SK-N-SH (cell line): ENCODE measurements at regions of chr1 and their contacts with region 1.

Region 1: GRCh38 chr1:5464346-5464745 is 527.9 kb downstream of the NPHP4 start:
- DNase-seq: no peak
- H3K4me3 ChIP-seq: no peak overlapping the region
- H3K27ac ChIP-seq: peak overlapping the region in 1 of 2 experiments; percentile 92; a peak in 2 of 4 replicates
- H3K4me1 ChIP-seq: peaks cover 0 to 25% of the 10 kb centered on the region in 2 experiments; a peak in 1 of 4 replicates
- H3K27me3 ChIP-seq: no peaks in the 10 kb centered on the region
- CTCF ChIP-seq: no peak
- EP300 ChIP-seq: no peak
- RAD21 ChIP-seq: no peak

Region 2: GRCh38 chr1:5481889-5482288 is 17.5 kb after region 1 on chr1:
- CTCF ChIA-PET with region 1: interaction called, 10 read pairs
- POLR2A ChIA-PET with region 1: interaction called, 3 read pairs
- DNase-seq: no peak
- H3K4me3 ChIP-seq: no peak overlapping the region
- H3K27ac ChIP-seq: no peak overlapping the region
- H3K4me1 ChIP-seq: peaks cover 0 to 37% of the 10 kb centered on the region in 2 experiments; a peak in 1 of 4 replicates
- H3K27me3 ChIP-seq: no peaks in the 10 kb centered on the region
- CTCF ChIP-seq: no peak
- EP300 ChIP-seq: no peak
- RAD21 ChIP-seq: peak; percentile 31